HepG2 (cell line): ENCODE measurements at regions of chr9 and their contacts with region 1.

Region 1: GRCh38 chr9:136363606-136364370 is at the start of gene DNLZ:
- DNase-seq: peak; percentile 58
- ATAC-seq: peak; percentile 58
- H3K4me3 ChIP-seq: peak within 1 kb of the TSS; percentile 86 to 91 (median 89)
- H3K27ac ChIP-seq: peak within 1 kb of the TSS; percentile 72
- H3K4me1 ChIP-seq: peaks cover 25% of the 10 kb centered on the region
- H3K27me3 ChIP-seq: no peaks in the 10 kb centered on the region
- CTCF ChIP-seq: peak; percentile 90
- EP300 ChIP-seq: no peak
- POLR2A ChIP-seq: peak in 1 of 2 experiments; percentile 28; a peak in 1 of 4 replicates
- RAD21 ChIP-seq: peak; percentile 93
- total RNA-seq, gene DNLZ: 5.4 and 8.0 TPM in 2 replicates

Region 2: DNA sequence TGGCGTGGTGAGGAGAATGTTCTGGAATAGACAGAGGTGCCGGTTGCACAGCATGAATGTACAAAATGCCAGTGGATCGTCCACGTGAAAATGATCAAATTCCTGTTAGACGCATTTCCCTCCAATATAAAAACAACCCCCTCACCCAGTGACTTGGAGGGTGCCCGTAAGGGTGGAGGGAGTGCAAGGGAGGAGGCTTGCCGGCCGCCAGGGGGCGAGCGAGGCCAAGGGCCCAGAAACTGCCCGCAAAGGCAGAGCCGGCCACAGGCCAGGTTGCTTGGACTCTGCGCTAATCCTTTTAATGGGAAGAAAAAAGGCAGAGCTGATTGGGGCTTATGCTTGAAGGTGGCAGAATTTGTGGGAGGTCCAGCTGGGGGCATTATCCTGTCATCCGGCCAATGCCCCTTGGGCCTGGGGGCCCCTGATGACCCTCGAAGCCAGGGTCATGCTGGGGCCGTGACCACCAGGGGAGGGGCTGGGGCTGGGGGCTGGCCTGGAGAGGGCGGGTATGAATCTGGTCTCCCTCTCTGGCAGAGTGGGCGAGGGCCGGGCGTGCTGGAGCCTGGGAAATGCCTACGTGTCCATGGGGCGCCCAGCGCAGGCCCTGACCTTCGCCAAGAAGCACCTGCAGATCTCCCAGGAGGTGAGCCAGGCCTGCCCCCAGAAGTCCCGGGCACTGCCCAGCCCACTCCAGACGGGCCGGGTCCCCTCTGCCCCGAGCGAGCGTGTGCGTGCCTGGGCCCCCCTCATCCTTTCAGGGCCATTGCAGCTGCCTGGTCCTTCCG is 24.4 kb before region 1 on chr9:
- CTCF ChIA-PET with region 1: interaction called, 10 read pairs
- POLR2A ChIA-PET with region 1: interaction called, 73 read pairs
- in situ Hi-C with region 1: no loop called
- intact Hi-C with region 1: loop called (anchors 2 kb)
- DNase-seq: peak; percentile 62
- ATAC-seq: peak; percentile 78
- H3K4me3 ChIP-seq: no peak overlapping the region; a peak in 1 of 6 replicates
- H3K27ac ChIP-seq: no peak overlapping the region
- H3K4me1 ChIP-seq: peaks cover 42% of the 10 kb centered on the region
- H3K27me3 ChIP-seq: peaks cover 4 to 20% of the 10 kb centered on the region in 2 experiments; a peak in 3 of 5 replicates
- CTCF ChIP-seq: peak; percentile 95
- EP300 ChIP-seq: no peak; a peak in 1 of 4 replicates
- POLR2A ChIP-seq: no peak
- RAD21 ChIP-seq: peak; percentile 90

Region 3: GRCh38 chr9:136345281-136346156 is 18.3 kb before region 1 on chr9:
- CTCF ChIA-PET with region 1: interaction called, 13 read pairs
- POLR2A ChIA-PET with region 1: interaction called, 73 read pairs
- in situ Hi-C with region 1: no loop called
- intact Hi-C with region 1: loop called (anchors 2 kb)
- DNase-seq: peak; percentile 70
- ATAC-seq: peak; percentile 84
- H3K4me3 ChIP-seq: peak overlapping the region; percentile 47 to 78 (median 47)
- H3K27ac ChIP-seq: no peak overlapping the region
- H3K4me1 ChIP-seq: peaks cover 51% of the 10 kb centered on the region
- H3K27me3 ChIP-seq: peaks cover 0 to 9% of the 10 kb centered on the region in 2 experiments; a peak in 2 of 5 replicates
- CTCF ChIP-seq: peak; percentile 95
- EP300 ChIP-seq: peak in 1 of 2 experiments; percentile 15; a peak in 1 of 4 replicates
- POLR2A ChIP-seq: no peak; a peak in 1 of 4 replicates
- RAD21 ChIP-seq: peak; percentile 83

Region 4: GRCh38 chr9:136410500-136411287 is 46.9 kb after region 1 on chr9 and contains the starts of genes ENTR1 and PMPCA:
- CTCF ChIA-PET with region 1: no interaction called
- POLR2A ChIA-PET with region 1: interaction called, 16 read pairs
- in situ Hi-C with region 1: no loop called
- intact Hi-C with region 1: no loop called
- DNase-seq: peak; percentile 71
- ATAC-seq: peak; percentile 81
- H3K4me3 ChIP-seq: peak within 1 kb of the TSS; percentile 70 to 99 (median 89)
- H3K27ac ChIP-seq: peak within 1 kb of the TSS; percentile 75
- H3K4me1 ChIP-seq: peaks cover 36% of the 10 kb centered on the region
- H3K27me3 ChIP-seq: no peaks in the 10 kb centered on the region; a peak in 1 of 5 replicates
- CTCF ChIP-seq: no peak
- EP300 ChIP-seq: no peak; a peak in 1 of 4 replicates
- POLR2A ChIP-seq: peak; percentile 86 to 98
- RAD21 ChIP-seq: 0 out of 2 replicates have a peak, but pooled peaks have one; percentile 14
- total RNA-seq, gene ENTR1: 56.6 and 76.4 TPM in 2 replicates
- total RNA-seq, gene PMPCA: 75.7 and 88.4 TPM in 2 replicates

Region 5: DNA sequence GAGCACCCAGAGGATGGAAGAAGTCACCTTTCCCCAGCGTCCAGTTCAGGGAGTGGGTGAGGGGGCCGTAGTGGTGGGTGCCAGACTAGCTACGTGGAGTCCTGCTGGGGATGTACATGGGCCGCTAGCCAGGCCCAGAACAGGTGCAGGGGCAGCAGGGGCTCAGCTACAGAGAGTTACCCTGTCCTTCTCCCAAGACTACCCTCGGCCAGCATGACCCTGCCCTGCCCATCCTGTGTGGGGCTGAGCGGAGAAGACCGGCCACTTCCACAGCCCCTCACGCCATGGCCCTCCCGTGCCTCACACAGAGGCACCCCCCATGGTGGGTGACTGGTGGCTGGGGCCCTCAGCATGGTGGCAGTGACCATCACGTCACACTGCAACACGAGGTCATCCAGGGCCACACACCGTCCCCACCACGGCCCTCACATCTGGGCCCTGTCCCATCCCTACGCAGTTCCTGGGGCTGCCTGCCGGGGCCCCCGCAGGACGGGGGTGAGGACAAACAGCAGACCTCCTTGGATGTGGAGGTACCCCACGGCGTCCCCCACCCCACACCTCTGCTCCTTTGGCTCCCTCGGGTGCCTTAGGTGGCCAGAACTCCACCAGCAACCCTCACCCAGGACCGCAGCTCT is 751.7 kb after region 1 on chr9:
- CTCF ChIA-PET with region 1: no interaction called
- POLR2A ChIA-PET with region 1: no interaction called
- in situ Hi-C with region 1: no loop called
- intact Hi-C with region 1: no loop called
- DNase-seq: no peak
- ATAC-seq: peak; percentile 10
- H3K4me3 ChIP-seq: no peak overlapping the region; a peak in 1 of 6 replicates
- H3K27ac ChIP-seq: no peak overlapping the region
- H3K4me1 ChIP-seq: peaks cover 63% of the 10 kb centered on the region
- H3K27me3 ChIP-seq: no peaks in the 10 kb centered on the region
- CTCF ChIP-seq: no peak
- EP300 ChIP-seq: no peak
- POLR2A ChIP-seq: no peak
- RAD21 ChIP-seq: no peak